ENCODE measurements at regions of chr9 and their contacts with region 1.

Region 1: GRCh38 chr9:91422758-91423711 is 597 bp downstream of the NFIL3 start:
- DNase-seq: peak; percentile 40 to 88
- H3K4me3 ChIP-seq: peak overlapping the region; percentile 83 to 86
- H3K27ac ChIP-seq: peak overlapping the region; percentile 94 to 95
- H3K4me1 ChIP-seq: peaks cover 0 to 22% of the 10 kb centered on the region in 2 donors
- H3K27me3 ChIP-seq: no peaks in the 10 kb centered on the region
- CTCF ChIP-seq: peak in 1 of 3 experiments; percentile 13

Region 2: GRCh38 chr9:90921111-90921510 is 501.9 kb before region 1 on chr9:
- intact Hi-C with region 1: loop called (anchors 2 kb)
- DNase-seq: peak; percentile 70 to 95
- H3K4me3 ChIP-seq: no peak overlapping the region
- H3K27ac ChIP-seq: peak overlapping the region; percentile 77 to 80
- H3K4me1 ChIP-seq: peaks cover 6 to 25% of the 10 kb centered on the region in 2 donors
- H3K27me3 ChIP-seq: no peaks in the 10 kb centered on the region
- CTCF ChIP-seq: no peak

Region 3: GRCh38 chr9:91101611-91102168 is 321.3 kb before region 1 on chr9:
- intact Hi-C with region 1: loop called (anchors 2 kb)
- DNase-seq: no peak
- H3K4me3 ChIP-seq: no peak overlapping the region
- H3K27ac ChIP-seq: peak overlapping the region; percentile 82 to 85
- H3K4me1 ChIP-seq: peaks cover 8 to 17% of the 10 kb centered on the region in 2 donors
- H3K27me3 ChIP-seq: no peaks in the 10 kb centered on the region
- CTCF ChIP-seq: no peak

Region 4: GRCh38 chr9:91301161-91301560 is 121.9 kb before region 1 on chr9:
- intact Hi-C with region 1: loop called (anchors 2 kb)
- DNase-seq: no peak
- H3K4me3 ChIP-seq: no peak overlapping the region
- H3K27ac ChIP-seq: peak overlapping the region; percentile 86
- H3K4me1 ChIP-seq: peaks cover 8 to 26% of the 10 kb centered on the region in 2 donors
- H3K27me3 ChIP-seq: no peaks in the 10 kb centered on the region
- CTCF ChIP-seq: no peak

Region 5: GRCh38 chr9:91465420-91465819 is 42.4 kb after region 1 on chr9:
- intact Hi-C with region 1: no loop called
- DNase-seq: no peak
- H3K4me3 ChIP-seq: no peak overlapping the region
- H3K27ac ChIP-seq: no peak overlapping the region
- H3K4me1 ChIP-seq: no peaks in the 10 kb centered on the region
- H3K27me3 ChIP-seq: no peaks in the 10 kb centered on the region
- CTCF ChIP-seq: no peak

Region 6: GRCh38 chr9:91483189-91483691 is 60.2 kb after region 1 on chr9:
- intact Hi-C with region 1: loop called (anchors 1 kb)
- DNase-seq: peak; percentile 29 to 85
- H3K4me3 ChIP-seq: peak overlapping the region in 1 of 2 donors; percentile 34
- H3K27ac ChIP-seq: peak overlapping the region; percentile 76 to 84
- H3K4me1 ChIP-seq: peaks cover 0 to 7% of the 10 kb centered on the region in 2 donors
- H3K27me3 ChIP-seq: no peaks in the 10 kb centered on the region
- CTCF ChIP-seq: no peak

Region 7: GRCh38 chr9:91500509-91501011 is 77.5 kb after region 1 on chr9:
- intact Hi-C with region 1: no loop called
- DNase-seq: no peak
- H3K4me3 ChIP-seq: no peak overlapping the region
- H3K27ac ChIP-seq: no peak overlapping the region
- H3K4me1 ChIP-seq: peaks cover 0 to 8% of the 10 kb centered on the region in 2 donors
- H3K27me3 ChIP-seq: no peaks in the 10 kb centered on the region
- CTCF ChIP-seq: no peak

Measured in ascending aorta (tissue), 2 donors.